HepG2 (cell line): ENCODE measurements at regions of chr17 and their contacts with region 1.

Region 1: DNA sequence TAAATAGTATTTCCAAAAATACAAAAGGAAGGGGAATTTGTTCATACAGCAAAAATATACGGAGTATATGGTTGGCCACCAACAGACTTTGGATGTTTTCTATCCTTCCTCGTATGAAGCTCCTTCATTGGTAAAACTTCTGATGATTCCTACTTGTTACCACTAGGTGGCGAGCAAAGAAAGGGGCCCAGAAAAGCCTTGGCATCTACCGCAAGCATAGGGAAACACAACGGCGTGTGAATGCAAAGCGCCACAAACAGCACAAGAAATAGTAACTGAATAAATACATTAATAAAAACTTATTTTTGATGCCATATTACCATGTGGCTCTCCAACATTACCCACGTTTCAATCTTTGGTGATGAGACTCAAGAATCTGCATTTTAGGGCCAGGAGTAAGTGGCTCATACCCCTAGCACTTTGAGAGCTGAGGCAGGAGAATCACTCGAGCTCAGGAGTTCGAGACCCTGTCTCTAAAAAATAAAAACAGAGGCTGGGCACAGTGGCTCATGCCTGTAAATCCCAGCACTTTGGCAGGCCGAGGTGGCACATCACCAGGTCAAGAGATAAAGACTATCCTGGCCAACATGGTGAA is 34.5 kb downstream of the YWHAE start:
- DNase-seq: peak; percentile 70
- ATAC-seq: peak; percentile 83
- H3K4me3 ChIP-seq: no peak overlapping the region
- H3K27ac ChIP-seq: no peak overlapping the region
- H3K4me1 ChIP-seq: peaks cover 19% of the 10 kb centered on the region
- H3K27me3 ChIP-seq: no peaks in the 10 kb centered on the region
- CTCF ChIP-seq: peak; percentile 86
- EP300 ChIP-seq: no peak
- POLR2A ChIP-seq: no peak
- RAD21 ChIP-seq: peak; percentile 64

Region 2: DNA sequence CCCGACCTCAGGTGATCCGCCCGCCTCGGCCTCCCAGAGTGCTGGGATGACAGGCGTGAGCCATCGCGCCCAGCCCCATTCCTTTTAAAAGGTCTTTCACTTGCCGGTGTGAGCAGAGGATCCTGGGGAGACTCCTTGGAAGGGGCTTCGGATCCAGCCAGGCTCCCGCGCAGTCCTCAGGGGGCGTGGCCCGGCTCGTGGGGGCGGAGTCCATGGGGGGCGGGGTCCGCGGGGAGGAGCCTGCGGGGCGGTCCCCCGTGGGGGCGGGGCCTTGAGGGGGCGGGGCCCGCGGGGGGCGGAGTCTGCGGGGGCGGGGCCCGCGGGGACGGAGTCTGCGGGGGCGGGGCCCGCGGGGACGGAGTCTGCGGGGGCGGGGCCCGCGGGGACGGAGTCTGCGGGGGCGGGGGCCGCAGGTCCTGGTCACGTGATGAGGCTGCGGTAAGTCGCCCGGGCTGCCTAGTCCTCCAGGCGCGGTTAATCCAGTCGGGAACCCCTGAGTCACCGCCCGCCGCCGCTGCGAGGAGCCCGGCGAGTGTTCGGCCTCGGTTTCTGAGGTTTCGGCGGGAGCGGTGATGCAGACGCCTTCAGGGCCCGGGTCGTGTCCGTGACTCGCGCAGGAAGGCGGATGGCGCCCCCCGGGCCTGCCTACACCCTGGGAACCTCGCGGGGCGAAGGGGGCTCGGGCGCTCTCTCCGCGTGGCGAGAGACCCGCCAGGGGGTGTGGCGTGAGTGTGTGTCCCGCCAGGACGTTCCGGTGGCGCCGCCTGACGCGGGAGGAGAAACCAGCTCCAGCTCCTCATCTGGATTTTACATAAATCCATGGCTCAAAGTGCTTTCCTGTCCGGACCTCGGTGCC is 162.2 kb before region 1 on chr17:
- CTCF ChIA-PET with region 1: no interaction called
- POLR2A ChIA-PET with region 1: no interaction called
- in situ Hi-C with region 1: no loop called
- intact Hi-C with region 1: no loop called
- DNase-seq: no peak
- ATAC-seq: no peak; the same call in 2 of the 3 replicates
- H3K4me3 ChIP-seq: no peak overlapping the region
- H3K27ac ChIP-seq: no peak overlapping the region
- H3K4me1 ChIP-seq: no peaks in the 10 kb centered on the region
- H3K27me3 ChIP-seq: peaks cover 0 to 25% of the 10 kb centered on the region in 2 experiments; a peak in 2 of 5 replicates
- CTCF ChIP-seq: no peak
- EP300 ChIP-seq: no peak
- POLR2A ChIP-seq: no peak
- RAD21 ChIP-seq: no peak

Region 3: GRCh38 chr17:1413281-1413791 is 47.8 kb after region 1 on chr17:
- CTCF ChIA-PET with region 1: no interaction called
- POLR2A ChIA-PET with region 1: no interaction called
- in situ Hi-C with region 1: no loop called
- intact Hi-C with region 1: loop called (anchors 10 kb)
- DNase-seq: peak; percentile 77
- ATAC-seq: peak; percentile 74
- H3K4me3 ChIP-seq: peak overlapping the region in 1 of 3 experiments; percentile 58; a peak in 1 of 6 replicates
- H3K27ac ChIP-seq: peak overlapping the region; percentile 31
- H3K4me1 ChIP-seq: peaks cover 36% of the 10 kb centered on the region
- H3K27me3 ChIP-seq: no peaks in the 10 kb centered on the region
- CTCF ChIP-seq: no peak
- EP300 ChIP-seq: peak in 1 of 2 experiments; percentile 29; a peak in 1 of 4 replicates
- POLR2A ChIP-seq: no peak
- RAD21 ChIP-seq: no peak